A549 (cell line): ENCODE measurements at regions of chr16 and their contacts with region 1.

Region 1: GRCh38 chr16:30902029-30902972 is 5.9 kb downstream of the CTF1 start:
- DNase-seq: peak; percentile 77 to 82
- ATAC-seq: peak; percentile 88 to 96
- H3K4me3 ChIP-seq: peak overlapping the region; percentile 49
- H3K27ac ChIP-seq: peak overlapping the region; percentile 89 to 95
- H3K4me1 ChIP-seq: 0 out of 3 replicates have a peak, but pooled peaks cover 1% of the 10 kb centered on the region
- CTCF ChIP-seq: peak; percentile 79
- EP300 ChIP-seq: no peak
- POLR2A ChIP-seq: peak; percentile 59; the same call in 1 of the 2 replicates
- RAD21 ChIP-seq: no peak; a peak in 1 of 5 replicates

Region 2: DNA sequence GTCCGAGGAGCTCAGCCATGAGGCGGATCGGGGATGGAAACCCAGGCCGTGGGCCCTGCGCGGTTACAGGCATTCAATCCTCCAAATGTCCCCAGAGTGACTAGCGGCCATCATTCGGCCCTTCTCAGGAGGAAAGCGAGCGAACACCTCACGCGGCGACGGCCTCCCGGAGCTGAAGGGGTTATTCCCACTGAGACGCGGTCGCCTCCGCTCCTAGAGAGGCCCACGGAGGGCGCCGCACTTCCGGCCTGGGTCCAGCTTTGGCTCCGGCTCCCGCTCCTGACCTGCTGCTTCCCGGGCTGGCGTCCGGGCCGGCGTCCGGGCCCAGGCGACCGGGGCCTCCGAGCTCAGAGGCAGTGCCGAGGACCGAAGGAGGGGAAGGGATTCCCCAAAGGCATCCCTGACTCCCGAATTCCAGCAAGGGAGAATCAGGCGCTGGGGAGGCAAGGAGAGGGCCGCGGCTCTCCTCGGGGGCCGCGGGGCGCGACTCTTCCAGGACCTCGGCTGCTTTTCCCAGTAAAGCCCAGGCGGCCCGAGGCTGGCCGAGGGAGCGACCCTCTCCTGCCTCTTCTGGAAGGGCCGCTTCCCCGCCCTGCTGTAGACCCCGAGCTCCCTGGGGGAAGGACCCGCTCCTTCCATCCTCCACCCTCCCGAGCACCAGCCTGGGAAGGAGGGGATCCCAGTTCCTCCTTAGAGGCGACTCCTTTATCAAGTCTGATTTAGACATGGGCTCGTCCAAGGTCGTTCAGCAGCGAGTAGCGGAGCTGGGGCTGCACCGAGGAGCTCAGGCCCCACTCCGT is 96.7 kb before region 1 on chr16:
- CTCF ChIA-PET with region 1: interaction called, 13 read pairs
- POLR2A ChIA-PET with region 1: interaction called, 5 read pairs
- DNase-seq: peak; percentile 88 to 89
- ATAC-seq: peak; percentile 98
- H3K4me3 ChIP-seq: peak overlapping the region; percentile 74
- H3K27ac ChIP-seq: peak overlapping the region; percentile 91 to 96
- H3K4me1 ChIP-seq: peaks cover 8% of the 10 kb centered on the region; the same call in 1 of the 3 replicates
- CTCF ChIP-seq: no peak
- EP300 ChIP-seq: peak in 1 of 2 experiments; percentile 25; a peak in 1 of 5 replicates
- POLR2A ChIP-seq: peak; percentile 89
- RAD21 ChIP-seq: peak in 1 of 2 experiments; percentile 34; a peak in 1 of 5 replicates

Region 3: DNA sequence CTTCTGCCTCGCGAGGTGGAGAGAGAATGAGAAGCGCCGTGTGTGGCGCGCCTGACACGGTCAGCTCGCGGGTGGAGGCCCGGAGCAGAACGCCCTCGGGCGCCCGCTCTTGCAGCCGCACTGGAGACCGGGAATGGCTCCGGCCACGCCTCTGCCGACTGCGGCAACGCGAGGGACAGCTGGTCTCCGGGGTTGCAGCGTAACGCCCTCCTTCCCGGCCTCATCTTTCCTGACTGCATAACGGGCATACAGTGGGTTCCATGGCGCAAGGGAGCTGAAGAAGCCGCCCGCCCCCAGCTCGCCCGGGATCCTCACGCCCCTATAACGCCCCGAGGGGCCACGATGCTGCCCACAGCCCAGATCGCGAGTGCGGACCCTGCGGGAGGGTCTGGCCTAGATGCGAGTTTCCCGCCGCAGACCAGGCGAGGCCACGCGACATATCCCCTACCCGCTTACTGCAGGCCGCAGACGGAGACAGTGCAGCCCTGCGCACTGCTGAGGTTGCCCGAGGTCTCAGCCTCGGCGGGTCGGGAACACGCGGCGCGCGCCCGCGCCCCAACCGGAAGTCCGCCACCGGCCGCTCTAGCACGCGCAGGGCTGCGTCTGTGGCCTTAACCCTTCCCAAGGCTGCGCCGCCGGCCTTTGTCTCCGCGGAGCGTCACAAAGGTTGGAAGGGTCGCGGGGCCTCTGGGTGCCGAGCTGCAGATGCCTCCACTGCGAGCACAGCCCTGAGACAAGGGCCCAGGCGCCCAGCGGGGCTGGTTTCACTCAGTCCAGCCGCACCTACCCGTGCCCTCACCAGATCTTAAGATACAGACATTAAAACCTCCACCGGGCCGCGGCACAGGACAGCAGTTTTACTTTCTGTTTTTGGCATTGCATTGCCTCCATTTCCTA is 27.2 kb before region 1 on chr16:
- CTCF ChIA-PET with region 1: interaction called, 14 read pairs
- POLR2A ChIA-PET with region 1: interaction called, 18 read pairs
- DNase-seq: peak; percentile 82 to 93
- ATAC-seq: peak; percentile 95 to 98
- H3K4me3 ChIP-seq: peak overlapping the region; percentile 71
- H3K27ac ChIP-seq: peak overlapping the region; percentile 90 to 96
- H3K4me1 ChIP-seq: peaks cover 13% of the 10 kb centered on the region; the same call in 2 of the 3 replicates
- CTCF ChIP-seq: no peak
- EP300 ChIP-seq: no peak
- POLR2A ChIP-seq: peak; percentile 99
- RAD21 ChIP-seq: peak in 1 of 2 experiments; percentile 29; a peak in 1 of 5 replicates

Region 4: GRCh38 chr16:30914830-30915229 is 12.5 kb after region 1 on chr16:
- CTCF ChIA-PET with region 1: interaction called, 22 read pairs
- POLR2A ChIA-PET with region 1: interaction called, 3 read pairs
- DNase-seq: no peak
- ATAC-seq: peak; percentile 27 to 51; a peak in 3 of 6 replicates
- H3K4me3 ChIP-seq: no peak overlapping the region
- H3K27ac ChIP-seq: no peak overlapping the region
- H3K4me1 ChIP-seq: no peaks in the 10 kb centered on the region
- CTCF ChIP-seq: no peak
- EP300 ChIP-seq: no peak
- POLR2A ChIP-seq: no peak
- RAD21 ChIP-seq: no peak

Region 5: DNA sequence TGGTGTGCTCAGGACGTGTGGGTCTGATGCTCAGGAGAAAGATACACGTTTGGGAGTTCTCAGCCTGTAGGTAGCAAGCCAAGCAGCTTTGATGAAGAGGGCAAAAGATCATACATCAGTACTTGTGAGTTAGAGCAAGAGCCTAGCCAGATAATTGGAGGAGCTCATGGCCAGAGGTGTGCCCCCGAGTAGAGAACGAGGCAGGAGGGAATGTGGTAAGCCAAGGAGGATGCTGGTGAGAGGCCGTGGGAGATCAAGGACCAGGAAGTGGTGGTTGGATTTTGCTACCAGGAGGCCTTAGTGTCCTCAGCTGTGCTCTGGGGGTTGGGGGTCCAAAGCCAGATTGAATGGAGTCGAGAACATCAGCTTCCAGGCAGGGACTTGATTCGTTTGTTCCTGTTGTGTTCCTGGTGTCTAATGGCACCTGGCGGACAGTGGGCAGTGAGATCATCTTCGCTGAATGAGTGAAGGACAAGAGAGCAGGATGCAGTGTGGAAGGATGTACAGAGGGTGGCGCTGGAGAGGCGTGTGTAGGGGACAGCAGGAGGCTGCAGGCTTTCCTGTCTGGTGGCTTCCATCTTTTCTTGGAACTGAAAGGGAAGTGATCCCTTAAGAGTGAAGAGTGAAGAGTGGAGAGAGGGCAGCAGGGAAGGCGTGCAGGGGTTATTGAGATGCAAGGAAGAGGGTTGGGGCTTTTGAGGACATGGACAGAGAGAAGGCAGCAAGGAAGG is 32.7 kb after region 1 on chr16:
- CTCF ChIA-PET with region 1: interaction called, 41 read pairs
- POLR2A ChIA-PET with region 1: interaction called, 3 read pairs
- DNase-seq: peak; percentile 45 to 72
- ATAC-seq: peak; percentile 57 to 84; a peak in 4 of 6 replicates
- H3K4me3 ChIP-seq: no peak overlapping the region
- H3K27ac ChIP-seq: no peak overlapping the region
- H3K4me1 ChIP-seq: peaks cover 4% of the 10 kb centered on the region; the same call in 1 of the 3 replicates
- CTCF ChIP-seq: peak; percentile 40
- EP300 ChIP-seq: no peak
- POLR2A ChIP-seq: no peak
- RAD21 ChIP-seq: 0 out of 5 replicates have a peak, but pooled peaks have one; percentile 15 to 22

Region 6: GRCh38 chr16:30997000-30997886 is 94.9 kb after region 1 on chr16:
- CTCF ChIA-PET with region 1: no interaction called
- POLR2A ChIA-PET with region 1: no interaction called
- DNase-seq: peak; percentile 93 to 95
- ATAC-seq: peak; percentile 77 to 87
- H3K4me3 ChIP-seq: peak overlapping the region; percentile 61
- H3K27ac ChIP-seq: peak overlapping the region; percentile 97 to 100
- H3K4me1 ChIP-seq: peaks cover 44% of the 10 kb centered on the region
- CTCF ChIP-seq: no peak
- EP300 ChIP-seq: no peak
- POLR2A ChIP-seq: peak; percentile 58
- RAD21 ChIP-seq: peak in 1 of 2 experiments; percentile 16; a peak in 1 of 5 replicates

Region 7: GRCh38 chr16:31168848-31169247 is 266.5 kb after region 1 on chr16:
- CTCF ChIA-PET with region 1: no interaction called
- POLR2A ChIA-PET with region 1: no interaction called
- DNase-seq: no peak
- ATAC-seq: peak in 1 of 2 experiments; percentile 69; a peak in 3 of 6 replicates
- H3K4me3 ChIP-seq: no peak overlapping the region
- H3K27ac ChIP-seq: no peak overlapping the region
- H3K4me1 ChIP-seq: no peaks in the 10 kb centered on the region
- CTCF ChIP-seq: no peak
- EP300 ChIP-seq: no peak
- POLR2A ChIP-seq: no peak
- RAD21 ChIP-seq: no peak